ENCODE measurements at regions of chr2 and their contacts with region 1.

Region 1: DNA sequence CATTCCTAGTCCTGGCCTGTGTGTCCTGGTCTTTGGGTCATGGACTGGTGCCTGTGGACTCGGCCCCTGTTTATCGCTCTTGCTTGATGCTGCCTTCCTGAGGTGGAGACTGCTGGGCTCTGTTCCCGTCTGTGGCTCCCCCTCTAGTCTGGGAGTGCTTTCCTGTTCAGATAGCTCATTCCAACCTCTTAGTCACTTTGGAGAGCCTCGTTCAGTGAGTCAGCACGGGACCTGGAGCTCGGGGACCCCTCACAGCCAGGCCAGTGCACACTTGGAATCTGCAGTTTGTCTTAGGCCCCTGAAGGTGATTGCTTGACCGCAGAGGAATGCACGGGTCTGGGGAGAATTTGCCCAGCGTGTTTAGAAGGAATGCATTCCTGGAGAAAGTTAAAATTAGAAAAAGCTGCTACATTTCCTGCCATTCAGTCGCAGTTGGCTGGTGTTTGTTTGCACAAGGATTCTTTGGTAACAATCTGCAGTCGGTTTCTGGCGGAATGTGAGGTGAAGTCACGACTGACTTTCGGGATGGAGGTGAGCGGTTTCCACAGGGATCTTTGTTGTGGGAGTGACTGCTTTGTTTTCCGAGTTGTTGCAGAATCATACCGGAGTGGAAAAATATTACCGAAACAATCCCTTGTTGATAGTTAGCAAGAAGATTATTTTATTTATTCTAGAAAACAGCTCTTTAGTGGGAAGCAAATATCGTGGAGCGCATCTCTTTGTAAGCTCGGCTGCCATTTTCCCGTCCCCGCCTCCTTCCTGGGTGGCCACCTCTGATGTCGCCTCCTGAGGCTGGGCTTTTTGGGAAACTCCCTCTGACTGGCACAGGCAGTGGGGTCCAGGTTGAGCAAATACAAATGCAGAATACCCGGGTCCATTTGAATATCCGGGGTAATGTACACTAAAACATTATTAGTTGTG is 29.6 kb downstream of the SH3BP4 start:
- DNase-seq: peak; percentile 68 to 85 (median 79)
- ATAC-seq: peak; percentile 84 to 95 (median 92)
- H3K4me3 ChIP-seq: peak overlapping the region in 10 of 12 donors; percentile 17 to 49 (median 30)
- H3K27ac ChIP-seq: peak overlapping the region; percentile 26 to 86 (median 72)
- H3K4me1 ChIP-seq: peaks cover 0 to 88% (median 61%) of the 10 kb centered on the region in 12 donors
- H3K27me3 ChIP-seq: no peaks in the 10 kb centered on the region
- CTCF ChIP-seq: peak in 2 of 12 donors; percentile 11 to 29
- POLR2A ChIP-seq: no peak

Region 2: GRCh38 chr2:235045336-235045972 is 64.0 kb after region 1 on chr2:
- intact Hi-C with region 1: loop called in 2 of 10 experiments (anchors 10 kb)
- DNase-seq: no peak
- ATAC-seq: no peak
- H3K4me3 ChIP-seq: no peak overlapping the region
- H3K27ac ChIP-seq: no peak overlapping the region
- H3K4me1 ChIP-seq: peaks cover 0 to 47% (median 16%) of the 10 kb centered on the region in 12 donors
- H3K27me3 ChIP-seq: no peaks in the 10 kb centered on the region
- CTCF ChIP-seq: no peak
- POLR2A ChIP-seq: no peak

Region 3: DNA sequence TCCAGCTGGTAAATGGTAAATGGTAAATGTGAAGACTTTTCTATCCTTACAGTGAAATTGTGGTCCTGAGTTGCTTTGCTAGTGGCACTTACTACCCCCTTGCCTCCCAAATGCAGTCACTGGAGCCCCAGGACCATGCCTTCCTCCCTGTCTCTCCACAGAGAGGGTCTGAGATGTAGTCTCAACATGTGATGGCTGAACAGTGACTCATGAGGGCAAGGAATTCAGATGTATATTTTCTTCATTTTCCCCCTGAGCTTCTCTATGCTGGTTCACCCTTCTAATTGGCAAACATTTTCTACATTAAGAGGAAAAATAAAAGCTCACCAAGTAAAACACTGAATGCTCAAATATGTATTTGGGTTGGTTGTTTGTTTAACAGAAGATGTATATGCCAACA is 202.3 kb after region 1 on chr2:
- intact Hi-C with region 1: no loop called
- DNase-seq: no peak
- ATAC-seq: no peak
- H3K4me3 ChIP-seq: no peak overlapping the region
- H3K27ac ChIP-seq: no peak overlapping the region
- H3K4me1 ChIP-seq: no peaks in the 10 kb centered on the region
- H3K27me3 ChIP-seq: peaks cover 0 to 43% (median 4%) of the 10 kb centered on the region in 9 donors
- CTCF ChIP-seq: no peak
- POLR2A ChIP-seq: no peak